Activated naive CD4-positive, alpha-beta T cell treated with anti-CD3 and anti-CD28 coated beads for 36 hours (primary cell): ENCODE measurements at regions of chr3 and their contacts with region 1.

Region 1: DNA sequence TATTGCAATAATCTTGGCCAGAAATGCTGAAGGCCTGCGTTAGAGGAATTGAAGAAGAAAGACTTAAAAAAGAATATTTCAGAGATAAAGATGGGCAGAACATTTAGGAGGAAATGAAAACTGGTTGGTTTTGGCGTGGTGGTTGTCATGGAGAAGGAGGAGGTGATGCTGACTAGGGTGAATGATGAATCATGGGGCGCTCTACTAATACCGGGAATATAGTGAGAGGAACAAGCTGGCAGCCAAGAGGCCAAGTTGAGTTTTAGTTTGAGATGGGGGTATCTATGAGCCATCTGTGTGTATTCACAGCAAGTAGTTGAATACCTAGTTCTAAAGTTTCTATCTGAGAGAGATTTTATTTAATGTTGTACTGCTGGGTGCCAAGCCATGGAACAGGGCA is 6.8 kb upstream of the GAP43 start:
- DNase-seq: peak; percentile 60
- H3K4me3 Mint-ChIP-seq: no peak overlapping the region
- H3K27ac Mint-ChIP-seq: no peak overlapping the region
- H3K4me1 Mint-ChIP-seq: peaks cover 11% of the 10 kb centered on the region
- H3K27me3 Mint-ChIP-seq: peaks cover 22% of the 10 kb centered on the region

Region 2: DNA sequence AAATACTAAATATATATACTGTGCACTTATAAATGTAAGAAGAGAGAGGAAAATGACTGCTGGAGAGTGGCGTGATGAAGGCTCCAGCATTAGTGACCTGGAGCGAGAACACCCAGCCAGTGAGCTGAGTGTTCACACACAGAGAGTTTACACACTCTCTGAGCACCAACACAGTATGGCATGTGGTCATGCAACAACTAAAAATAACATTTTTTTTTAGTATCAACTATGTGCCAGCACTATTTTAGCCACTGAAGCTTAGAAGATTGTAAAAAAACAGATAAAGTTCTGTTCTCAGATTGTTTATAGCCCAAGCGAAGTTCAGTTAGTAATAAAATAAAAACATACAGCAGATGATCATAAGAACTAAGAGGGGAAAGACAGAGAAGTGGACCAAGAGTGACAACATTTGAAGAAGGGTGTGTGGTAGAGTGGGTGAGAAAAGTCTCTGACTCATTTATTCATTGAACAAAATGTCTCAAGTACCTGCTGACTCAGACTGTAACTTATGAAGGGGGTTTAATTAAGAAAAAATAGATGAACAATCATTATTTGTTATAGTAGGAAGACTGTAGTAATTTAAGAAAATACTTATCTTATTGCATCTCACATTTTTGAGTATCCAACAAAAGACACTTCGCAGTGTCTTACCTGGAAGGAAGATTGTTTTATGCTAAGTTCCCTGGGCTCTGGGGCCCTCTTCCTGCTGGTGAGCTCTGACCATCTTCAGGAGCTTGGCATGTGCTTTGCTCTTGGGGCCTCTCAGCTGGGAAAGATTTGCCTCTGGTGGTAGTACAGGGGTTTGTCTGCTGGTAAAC is 50.7 kb after region 1 on chr3:
- CTCF ChIA-PET with region 1: no interaction called
- intact Hi-C with region 1: loop called (anchors 2 kb)
- DNase-seq: no peak
- H3K4me3 Mint-ChIP-seq: no peak overlapping the region
- H3K27ac Mint-ChIP-seq: no peak overlapping the region
- H3K4me1 Mint-ChIP-seq: peaks cover 28% of the 10 kb centered on the region
- H3K27me3 Mint-ChIP-seq: peaks cover 3% of the 10 kb centered on the region